Activated T-helper 2 cell treated with anti-CD3 and anti-CD28 coated beads, Interferon-gamma antibody, Interleukin-2, Interleukin-4, amounts not matched to agents 10 μg/mL and 5 μg/mL and 100 μg/mL, durations not matched to agents 14 hours and 24 hours and 36 hours (primary cell): ENCODE measurements at regions of chr1 and their contacts with region 1.

Region 1: DNA sequence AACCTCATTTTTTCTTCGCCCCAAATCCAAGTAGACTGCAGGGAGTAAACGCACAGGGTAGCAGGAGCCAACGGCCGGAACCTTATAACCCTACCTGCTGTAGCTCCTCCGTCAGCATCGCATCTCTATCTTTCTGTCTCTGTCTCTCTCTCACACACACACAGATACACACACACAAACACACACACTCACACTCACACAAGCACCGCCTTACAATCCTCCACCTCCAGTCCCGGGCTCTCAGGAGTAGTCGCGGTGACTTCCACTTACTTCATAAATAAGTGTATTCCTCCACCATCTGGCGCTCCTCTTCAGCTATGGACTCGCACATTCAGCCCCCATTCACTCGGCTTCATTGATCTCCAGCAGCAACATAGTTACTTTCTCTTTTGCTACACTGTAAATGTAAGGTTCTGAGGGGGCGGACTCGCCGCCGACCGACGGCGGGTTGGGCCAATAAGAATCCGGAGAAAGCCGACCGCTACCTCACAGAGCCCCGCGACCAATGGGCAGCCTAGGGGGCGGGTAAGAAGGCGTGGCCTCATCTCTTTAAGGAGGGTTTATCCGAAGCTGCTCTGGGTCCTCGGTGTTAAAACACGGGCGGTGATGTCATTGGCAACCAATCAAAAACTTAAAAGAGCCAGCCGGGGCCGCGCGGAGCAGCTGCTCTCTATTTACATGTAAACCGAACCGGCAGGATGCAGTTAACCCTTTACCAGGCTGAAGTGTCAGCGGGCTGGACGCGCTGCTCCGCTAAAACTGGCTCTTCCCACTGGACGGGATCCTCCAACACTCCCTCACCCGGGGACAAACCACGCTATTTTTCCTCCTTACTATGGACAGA is at the start of gene DUSP10:
- DNase-seq: peak; percentile 99
- H3K4me3 Mint-ChIP-seq: no peak within 1 kb of the TSS
- H3K27ac Mint-ChIP-seq: peak within 1 kb of the TSS; percentile 78
- H3K4me1 Mint-ChIP-seq: peaks cover 33% of the 10 kb centered on the region
- H3K27me3 Mint-ChIP-seq: no peaks in the 10 kb centered on the region
- total RNA-seq, gene DUSP10: 21.0 and 21.7 TPM in 2 replicates

Region 2: DNA sequence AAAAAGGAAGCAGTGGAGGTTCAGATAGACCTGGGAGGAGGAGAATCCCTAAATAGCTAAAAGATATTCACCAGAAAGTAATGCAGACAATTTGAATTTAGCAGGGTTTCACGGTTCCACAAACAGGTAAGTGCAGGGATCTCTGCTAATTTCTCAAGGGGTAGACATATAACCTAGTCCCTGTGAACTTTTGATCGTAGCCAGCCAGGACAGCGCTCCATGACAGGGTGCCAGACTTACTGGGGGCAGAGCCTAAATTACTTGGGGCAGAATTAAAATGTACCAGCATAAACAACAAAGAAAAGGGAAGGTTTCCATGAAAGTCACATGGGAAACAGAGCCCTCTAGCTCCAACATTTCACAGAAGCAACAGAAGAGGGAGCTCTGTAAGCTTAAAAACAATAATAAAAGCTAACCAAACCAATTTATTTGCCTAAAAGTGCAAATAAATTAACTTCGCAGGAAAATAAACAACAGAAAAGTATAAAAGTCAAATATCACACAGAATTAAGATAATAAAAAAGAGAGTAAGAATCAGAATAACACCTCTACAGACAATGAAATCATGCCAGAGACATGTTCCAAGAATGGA is 198.3 kb before region 1 on chr1:
- intact Hi-C with region 1: loop called (anchors 1 kb)
- DNase-seq: no peak
- H3K4me3 Mint-ChIP-seq: no peak overlapping the region
- H3K27ac Mint-ChIP-seq: no peak overlapping the region
- H3K4me1 Mint-ChIP-seq: peaks cover 2% of the 10 kb centered on the region
- H3K27me3 Mint-ChIP-seq: peaks cover 18% of the 10 kb centered on the region

Region 3: DNA sequence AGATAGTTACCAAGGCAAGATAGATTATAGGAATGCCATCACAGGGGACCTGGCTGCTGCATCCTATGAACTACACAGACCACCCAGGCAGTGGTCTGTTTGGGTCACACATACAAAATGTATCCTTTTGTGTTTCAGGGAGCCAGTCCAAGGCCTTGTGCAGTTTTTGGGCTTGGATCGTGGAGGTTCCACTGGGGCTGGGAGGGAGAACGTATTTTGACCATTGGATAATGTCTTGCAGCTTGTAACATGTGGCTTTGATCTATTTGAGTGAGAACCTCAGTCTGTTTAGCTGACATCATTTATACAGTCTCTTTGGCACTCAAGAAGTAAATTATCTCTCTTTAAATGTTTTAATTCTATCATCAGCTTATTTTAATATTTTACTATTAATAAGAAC is 147.4 kb before region 1 on chr1:
- intact Hi-C with region 1: no loop called
- DNase-seq: no peak
- H3K4me3 Mint-ChIP-seq: no peak overlapping the region
- H3K27ac Mint-ChIP-seq: no peak overlapping the region
- H3K4me1 Mint-ChIP-seq: no peaks in the 10 kb centered on the region
- H3K27me3 Mint-ChIP-seq: no peaks in the 10 kb centered on the region

Region 4: GRCh38 chr1:221708987-221709386 is 32.9 kb before region 1 on chr1:
- intact Hi-C with region 1: loop called (anchors 1 kb)
- DNase-seq: peak; percentile 41
- H3K4me3 Mint-ChIP-seq: peak overlapping the region; percentile 33
- H3K27ac Mint-ChIP-seq: peak overlapping the region; percentile 98
- H3K4me1 Mint-ChIP-seq: peaks cover 65% of the 10 kb centered on the region
- H3K27me3 Mint-ChIP-seq: no peaks in the 10 kb centered on the region

Region 5: GRCh38 chr1:221753828-221754188 is 11.9 kb after region 1 on chr1:
- intact Hi-C with region 1: loop called (anchors 1 kb)
- DNase-seq: no peak
- H3K4me3 Mint-ChIP-seq: peak overlapping the region; percentile 28
- H3K27ac Mint-ChIP-seq: peak overlapping the region; percentile 81
- H3K4me1 Mint-ChIP-seq: peaks cover 50% of the 10 kb centered on the region
- H3K27me3 Mint-ChIP-seq: no peaks in the 10 kb centered on the region

Region 6: DNA sequence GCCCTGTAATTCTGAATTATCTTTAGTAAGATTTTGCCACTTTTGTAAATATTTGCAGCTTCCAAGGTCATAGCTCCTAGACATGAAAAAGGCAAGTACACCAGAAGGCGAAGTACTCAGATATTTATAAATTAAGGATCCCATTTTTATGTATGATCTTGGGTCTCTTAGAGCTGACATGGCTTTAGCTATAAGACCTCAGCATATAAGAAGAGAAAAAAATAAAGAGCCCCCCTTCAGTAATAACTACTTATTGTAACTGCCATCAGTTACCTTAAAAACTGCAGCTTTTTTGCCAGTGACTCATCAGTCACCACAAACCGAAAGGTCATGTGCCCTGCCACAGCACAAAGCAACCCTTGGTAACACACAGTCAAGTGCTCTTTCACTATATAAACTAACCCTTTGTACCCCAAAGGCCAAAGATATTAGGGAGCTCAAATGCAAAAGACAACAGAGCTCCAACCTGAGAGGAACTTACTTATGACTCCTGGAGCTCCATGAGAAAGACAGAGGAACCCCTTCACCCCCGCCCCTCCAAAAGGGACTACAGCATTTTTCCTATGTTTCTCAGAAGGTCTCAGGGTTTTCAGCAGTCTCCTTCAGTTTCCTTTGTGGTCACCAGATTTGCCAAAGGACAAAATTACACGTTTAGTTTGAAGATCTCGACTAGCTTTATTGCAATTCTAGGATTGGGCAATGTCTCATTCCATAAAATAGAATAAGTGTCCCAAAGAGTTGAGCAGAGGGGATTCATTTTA is 219.8 kb after region 1 on chr1:
- intact Hi-C with region 1: loop called (anchors 5 kb)
- DNase-seq: peak; percentile 37
- H3K4me3 Mint-ChIP-seq: no peak overlapping the region
- H3K27ac Mint-ChIP-seq: peak overlapping the region; percentile 4
- H3K4me1 Mint-ChIP-seq: peaks cover 21% of the 10 kb centered on the region
- H3K27me3 Mint-ChIP-seq: no peaks in the 10 kb centered on the region

Region 7: GRCh38 chr1:222009105-222009730 is 267.3 kb after region 1 on chr1:
- intact Hi-C with region 1: loop called (anchors 1 kb)
- DNase-seq: no peak
- H3K4me3 Mint-ChIP-seq: no peak overlapping the region
- H3K27ac Mint-ChIP-seq: no peak overlapping the region
- H3K4me1 Mint-ChIP-seq: peaks cover 6% of the 10 kb centered on the region
- H3K27me3 Mint-ChIP-seq: peaks cover 33% of the 10 kb centered on the region